ENCODE measurements at regions of chr12 and their contacts with region 1.

Region 1: DNA sequence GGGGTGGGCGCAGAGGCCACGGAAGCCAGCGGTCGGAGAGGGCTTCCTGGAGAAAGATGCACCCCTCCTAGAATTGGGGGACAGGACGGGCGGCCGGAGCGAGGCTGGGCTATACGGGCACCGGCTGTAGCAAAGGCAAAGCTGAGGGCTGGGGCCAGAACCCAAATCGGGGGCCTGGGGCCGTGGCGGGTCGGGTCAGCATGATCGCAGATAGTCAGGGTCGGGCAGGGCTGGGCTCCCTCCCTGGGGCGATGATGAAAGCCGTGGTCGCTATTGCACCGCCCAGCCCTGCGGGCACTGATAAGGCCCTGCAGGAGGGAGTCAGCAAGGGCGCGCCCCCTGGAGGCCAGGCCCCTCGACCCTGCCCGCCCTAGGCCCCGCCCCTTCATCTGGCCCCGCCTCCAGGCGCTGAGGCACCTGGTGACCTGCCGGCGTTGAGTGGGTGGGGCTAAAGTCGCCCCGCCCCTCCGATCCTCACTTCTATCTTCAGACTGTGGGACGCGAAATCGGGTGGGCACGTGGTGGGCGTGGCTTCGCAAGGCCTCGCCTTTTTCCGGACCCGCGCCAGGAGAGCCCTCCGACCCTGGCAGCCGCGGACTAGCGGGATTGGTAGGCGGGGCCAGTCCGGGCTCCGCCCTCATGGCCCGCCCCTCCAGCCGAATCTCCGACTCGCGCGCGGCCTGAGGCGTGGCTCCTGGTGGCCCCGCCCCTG is 418 bp upstream of the SH2B3 start:
- DNase-seq: peak; percentile 95
- H3K4me3 ChIP-seq: peak overlapping the region; percentile 57 to 96 (median 76)
- H3K27ac ChIP-seq: peak overlapping the region; percentile 77 to 88 (median 83)
- H3K4me1 ChIP-seq: peaks cover 0 to 67% (median 55%) of the 10 kb centered on the region in 4 donors
- H3K27me3 ChIP-seq: no peaks in the 10 kb centered on the region
- CTCF ChIP-seq: peak in 3 of 4 experiments; percentile 17 to 42 (median 35)
- EP300 ChIP-seq: no peak
- POLR2A ChIP-seq: no peak

Region 2: GRCh38 chr12:111529424-111530368 is 124.4 kb after region 1 on chr12:
- intact Hi-C with region 1: loop called (anchors 5 kb)
- DNase-seq: no peak
- H3K4me3 ChIP-seq: no peak overlapping the region
- H3K27ac ChIP-seq: no peak overlapping the region
- H3K4me1 ChIP-seq: no peaks in the 10 kb centered on the region
- H3K27me3 ChIP-seq: no peaks in the 10 kb centered on the region
- CTCF ChIP-seq: peak in 3 of 4 experiments; percentile 40 to 58 (median 51)
- EP300 ChIP-seq: no peak
- POLR2A ChIP-seq: no peak

Region 3: DNA sequence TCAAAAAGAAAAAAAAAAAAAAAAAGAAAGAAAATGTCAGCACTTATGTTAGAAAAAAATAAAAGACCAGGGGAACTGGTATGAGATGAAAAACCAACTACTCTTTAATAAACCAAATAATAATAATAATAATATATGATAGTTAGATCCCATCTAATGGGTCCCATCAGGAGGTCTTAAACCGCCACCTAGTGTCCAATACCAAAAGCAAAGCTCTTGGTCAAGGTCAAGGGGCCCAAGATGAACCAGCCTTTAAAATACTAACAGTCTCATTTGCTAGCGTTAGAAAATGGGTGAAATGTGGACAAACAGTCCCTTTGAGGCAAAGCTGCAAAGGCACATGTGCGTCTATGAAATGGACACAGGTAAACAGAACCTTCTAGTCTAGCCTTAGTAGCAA is 268.2 kb after region 1 on chr12:
- intact Hi-C with region 1: loop called (anchors 10 kb)
- DNase-seq: no peak
- H3K4me3 ChIP-seq: no peak overlapping the region
- H3K27ac ChIP-seq: peak overlapping the region in 2 of 4 donors; percentile 17 to 47
- H3K4me1 ChIP-seq: peaks cover 0 to 12% (median 5%) of the 10 kb centered on the region in 4 donors
- H3K27me3 ChIP-seq: no peaks in the 10 kb centered on the region
- CTCF ChIP-seq: peak in 2 of 4 experiments; percentile 12 to 21
- EP300 ChIP-seq: no peak
- POLR2A ChIP-seq: no peak

Measured in sigmoid colon (tissue), 7 donors.